ENCODE measurements at regions of chr6 and their contacts with region 1.

Region 1: DNA sequence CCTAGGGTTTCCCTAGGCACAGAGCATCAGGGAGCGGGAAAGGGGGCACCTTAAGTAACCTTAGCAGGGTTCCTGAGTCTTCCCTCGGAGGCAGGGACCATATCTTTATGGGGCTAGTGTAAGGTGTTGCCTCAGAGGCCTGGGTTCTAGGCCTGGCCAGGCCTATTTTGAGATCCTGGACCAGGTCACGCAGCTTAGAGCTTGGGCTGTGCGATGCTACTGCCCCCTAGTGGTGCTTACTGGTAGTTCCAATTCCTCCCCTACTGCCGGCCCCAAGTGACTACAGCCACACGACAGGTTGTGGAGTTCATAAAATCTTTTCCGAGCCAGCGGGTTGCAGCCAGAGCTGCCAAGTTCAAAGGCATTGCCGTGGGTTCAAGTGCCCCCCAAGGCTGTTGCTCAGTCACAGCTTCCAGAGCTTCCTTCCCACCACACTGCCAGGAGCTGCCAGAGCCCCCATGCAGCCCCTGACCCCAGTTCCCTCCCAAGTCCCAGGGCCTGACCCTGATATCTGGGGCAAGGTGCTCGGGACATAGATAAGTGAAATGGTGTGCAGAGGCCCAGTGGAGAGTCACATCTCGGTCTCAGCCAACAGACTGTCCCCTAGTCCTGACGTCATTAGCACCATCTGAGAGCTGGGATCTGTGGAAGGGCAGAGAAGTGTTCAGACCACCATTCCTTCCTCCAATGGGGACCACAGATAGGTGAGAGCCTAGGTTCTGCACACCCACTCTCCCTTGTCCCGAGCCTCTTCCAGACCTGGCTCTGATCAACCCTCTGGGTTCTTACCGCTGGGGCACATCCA is 3.3 kb downstream of the LRRC73 start:
- DNase-seq: peak; percentile 84 to 93 (median 86)
- H3K4me3 ChIP-seq: no peak overlapping the region
- H3K27ac ChIP-seq: no peak overlapping the region
- H3K4me1 ChIP-seq: peaks cover 0 to 21% (median 17%) of the 10 kb centered on the region in 4 experiments
- H3K27me3 ChIP-seq: peaks cover 0 to 42% (median 17%) of the 10 kb centered on the region in 5 experiments

Region 2: GRCh38 chr6:43383021-43383667 is 123.7 kb before region 1 on chr6:
- CTCF ChIA-PET with region 1: interaction called, 23 read pairs
- POLR2A ChIA-PET with region 1: no interaction called
- DNase-seq: no peak
- H3K4me3 ChIP-seq: no peak overlapping the region
- H3K27ac ChIP-seq: no peak overlapping the region
- H3K4me1 ChIP-seq: peaks cover 9 to 20% (median 15%) of the 10 kb centered on the region in 4 experiments
- H3K27me3 ChIP-seq: peaks cover 5 to 78% (median 35%) of the 10 kb centered on the region in 5 experiments

Region 3: GRCh38 chr6:43454696-43455530 is 52.0 kb before region 1 on chr6:
- CTCF ChIA-PET with region 1: interaction called, 32 read pairs
- POLR2A ChIA-PET with region 1: interaction called, 4 read pairs
- DNase-seq: peak in 2 of 3 donors; percentile 35 to 69
- H3K4me3 ChIP-seq: peak overlapping the region; percentile 30 to 80 (median 65)
- H3K27ac ChIP-seq: no peak overlapping the region
- H3K4me1 ChIP-seq: peaks cover 0 to 15% (median 14%) of the 10 kb centered on the region in 4 experiments
- H3K27me3 ChIP-seq: peaks cover 0 to 40% (median 12%) of the 10 kb centered on the region in 5 experiments

Region 4: DNA sequence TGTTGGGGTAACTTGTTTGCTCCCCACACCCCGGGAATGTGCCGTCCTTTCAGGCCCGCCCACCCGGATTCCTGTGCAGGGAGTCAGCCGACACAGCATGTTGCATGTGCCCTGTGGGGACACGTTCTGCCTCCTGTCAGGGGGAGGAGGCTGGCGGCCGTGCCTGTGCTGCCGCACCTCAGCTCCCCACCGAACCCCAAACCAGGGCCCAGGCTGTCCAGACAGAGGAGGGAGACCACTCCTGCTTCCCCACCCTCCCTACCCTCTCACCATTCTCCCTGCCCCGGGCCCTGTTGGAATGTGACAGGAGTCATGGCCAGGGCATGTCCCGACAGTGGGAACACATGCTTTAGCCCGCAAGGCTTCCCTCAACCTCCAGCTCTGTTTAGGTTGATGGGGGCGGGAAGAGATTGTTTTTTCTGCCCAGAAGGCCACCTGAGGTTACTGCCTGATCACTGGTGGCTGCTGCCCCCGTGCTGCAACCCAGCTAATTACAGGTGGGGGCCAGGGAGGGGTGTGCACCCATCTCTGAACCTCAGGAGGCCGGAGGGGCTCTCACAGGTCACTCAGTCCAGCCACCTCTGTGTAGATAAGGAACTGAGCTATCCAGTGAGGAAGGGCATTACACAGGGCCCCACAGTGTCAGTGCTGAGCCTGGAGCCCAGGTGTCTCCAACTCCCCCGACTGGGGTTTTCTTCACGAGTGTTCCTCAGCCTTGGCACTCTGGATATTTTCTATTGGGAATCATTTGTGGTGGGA is 10.3 kb before region 1 on chr6:
- CTCF ChIA-PET with region 1: interaction called, 64 read pairs
- POLR2A ChIA-PET with region 1: no interaction called
- DNase-seq: peak in 1 of 3 donors; percentile 24
- H3K4me3 ChIP-seq: no peak overlapping the region
- H3K27ac ChIP-seq: no peak overlapping the region
- H3K4me1 ChIP-seq: peaks cover 0 to 7% (median 6%) of the 10 kb centered on the region in 4 experiments
- H3K27me3 ChIP-seq: no peaks in the 10 kb centered on the region

Region 5: DNA sequence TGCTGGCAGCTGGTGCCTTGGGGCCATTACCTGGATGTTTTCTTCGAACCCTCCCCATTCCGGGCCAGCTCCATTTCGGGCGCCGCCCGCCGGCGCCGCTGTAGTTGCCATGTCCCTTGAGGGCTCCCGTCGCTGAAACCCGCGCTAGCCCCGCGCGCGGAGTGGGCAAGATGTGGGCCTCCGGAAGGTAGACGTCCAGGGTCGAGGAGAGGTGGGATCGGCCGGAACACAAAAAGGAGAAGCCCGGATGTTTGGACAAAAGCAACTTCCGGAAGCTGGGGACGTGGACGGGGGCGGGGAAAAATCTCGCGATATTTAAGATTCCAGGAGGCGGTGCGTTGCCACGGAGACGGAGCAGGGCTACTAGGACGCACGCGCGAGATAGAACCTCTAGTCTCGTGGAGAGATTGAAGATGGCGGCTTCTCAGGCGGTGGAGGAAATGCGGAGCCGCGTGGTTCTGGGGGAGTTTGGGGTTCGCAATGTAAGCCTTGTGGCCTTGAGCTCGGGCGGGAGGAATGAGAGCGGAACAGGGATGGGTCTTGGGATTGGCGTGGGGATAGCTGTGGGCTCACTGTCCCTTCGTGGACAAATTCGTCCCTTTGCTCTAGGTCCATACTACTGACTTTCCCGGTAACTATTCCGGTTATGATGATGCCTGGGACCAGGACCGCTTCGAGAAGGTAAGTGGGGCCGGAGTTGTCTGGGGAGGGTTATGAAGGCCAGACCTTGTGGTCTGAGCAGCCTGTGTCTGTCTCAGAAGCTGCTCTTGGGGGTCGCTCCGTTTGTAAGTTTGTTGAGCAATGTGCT is 10.0 kb after region 1 on chr6 and contains the starts of genes POLR1C and YIPF3:
- CTCF ChIA-PET with region 1: interaction called, 10 read pairs
- POLR2A ChIA-PET with region 1: no interaction called
- DNase-seq: peak; percentile 97 to 98 (median 97)
- H3K4me3 ChIP-seq: peak within 1 kb of the TSS; percentile 92 to 100 (median 99)
- H3K27ac ChIP-seq: peak within 1 kb of the TSS; percentile 95 to 97
- H3K4me1 ChIP-seq: peaks cover 16 to 34% (median 23%) of the 10 kb centered on the region in 4 experiments
- H3K27me3 ChIP-seq: no peaks in the 10 kb centered on the region

Measured in common myeloid progenitor, CD34-positive (primary cell).